Dendritic cell treated with granulocyte-macrophage colony-stimulating factor and Interleukin-4, amounts not matched to agents 40 ng/mL and 50 ng/mL, for 4 days (primary cell): ENCODE measurements at regions of chr17 and their contacts with region 1.

Region 1: GRCh38 chr17:76506408-76507349 is 5.5 kb upstream of the RHBDF2 start:
- H3K4me3 Mint-ChIP-seq: no peak overlapping the region
- H3K27ac Mint-ChIP-seq: no peak overlapping the region
- H3K4me1 Mint-ChIP-seq: peaks cover 52% of the 10 kb centered on the region
- H3K27me3 Mint-ChIP-seq: peaks cover 18% of the 10 kb centered on the region

Region 2: GRCh38 chr17:76466775-76467130 is 39.9 kb before region 1 on chr17:
- intact Hi-C with region 1: loop called (anchors 1 kb)
- H3K4me3 Mint-ChIP-seq: no peak overlapping the region
- H3K27ac Mint-ChIP-seq: no peak overlapping the region
- H3K4me1 Mint-ChIP-seq: peaks cover 7% of the 10 kb centered on the region
- H3K27me3 Mint-ChIP-seq: peaks cover 18% of the 10 kb centered on the region